Activated CD8-positive, alpha-beta memory T cell treated with anti-CD3 and anti-CD28 coated beads, Interleukin-2, amount 10 ng/mL, durations not matched to agents 7 days and 5 days (primary cell): ENCODE measurements at regions of chr5 and their contacts with region 1.

Region 1: GRCh38 chr5:160439205-160439600 is 17.5 kb downstream of the PTTG1 start:
- DNase-seq: peak; percentile 94
- ATAC-seq: peak; percentile 85
- H3K4me3 Mint-ChIP-seq: peak overlapping the region; percentile 87
- H3K27ac Mint-ChIP-seq: peak overlapping the region; percentile 92
- H3K4me1 Mint-ChIP-seq: peaks cover 44% of the 10 kb centered on the region
- H3K27me3 Mint-ChIP-seq: peaks cover 4% of the 10 kb centered on the region

Region 2: GRCh38 chr5:160418561-160419457 is 20.4 kb before region 1 on chr5 and contains the start of gene SLU7:
- CTCF ChIA-PET with region 1: interaction called, 130 read pairs
- DNase-seq: peak; percentile 96
- ATAC-seq: peak; percentile 79
- H3K4me3 Mint-ChIP-seq: peak within 1 kb of the TSS; percentile 87
- H3K27ac Mint-ChIP-seq: peak within 1 kb of the TSS; percentile 96
- H3K4me1 Mint-ChIP-seq: peaks cover 58% of the 10 kb centered on the region
- H3K27me3 Mint-ChIP-seq: no peaks in the 10 kb centered on the region
- total RNA-seq, gene SLU7: 50.1 to 54.6 TPM

Region 3: DNA sequence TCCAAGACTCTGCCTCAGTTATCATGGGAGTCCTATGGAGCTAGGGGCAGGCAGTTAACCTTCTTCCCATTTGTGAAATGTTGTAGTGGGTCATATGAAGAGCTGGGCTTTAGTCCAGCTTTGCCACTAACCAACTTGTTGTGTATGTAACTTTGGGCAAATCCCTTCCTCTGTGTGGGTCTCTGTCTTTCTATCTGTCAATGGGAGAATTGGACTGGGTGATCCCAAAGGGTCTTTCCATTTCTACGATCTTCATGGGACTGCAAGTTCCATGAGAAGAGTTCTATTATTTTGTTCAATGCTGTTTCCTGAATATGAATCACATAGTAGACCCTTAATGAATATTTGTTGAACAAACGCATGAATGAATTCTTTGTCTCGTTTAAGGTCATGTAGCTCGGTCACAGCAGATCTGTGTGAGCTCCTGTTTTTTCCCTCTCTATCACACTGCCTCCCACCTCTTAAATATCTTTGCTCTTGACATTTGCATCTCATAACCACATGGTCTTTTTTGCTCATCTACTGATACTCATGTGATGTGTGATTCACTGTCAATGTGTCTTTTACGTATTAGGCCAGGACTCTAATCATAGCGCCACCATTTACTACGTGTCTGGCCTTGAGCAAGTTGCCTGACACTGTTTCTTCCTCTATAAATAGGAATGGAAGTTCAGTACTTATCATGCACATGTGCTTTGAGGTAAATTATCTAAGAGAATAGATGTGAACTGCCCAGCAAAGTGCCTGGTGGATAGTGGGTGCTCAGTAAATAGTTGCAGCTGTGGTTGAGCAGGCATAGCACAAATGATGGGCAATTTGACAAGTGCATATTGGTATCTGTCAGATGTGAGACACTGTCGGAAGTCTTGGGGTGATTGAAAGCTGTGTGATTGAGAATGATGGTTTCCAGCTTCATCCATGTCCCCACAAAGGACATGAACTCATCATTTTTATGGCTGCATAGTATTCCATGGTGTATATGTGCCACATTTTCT is 19.9 kb after region 1 on chr5:
- CTCF ChIA-PET with region 1: interaction called, 172 read pairs
- DNase-seq: no peak
- ATAC-seq: no peak
- H3K4me3 Mint-ChIP-seq: no peak overlapping the region
- H3K27ac Mint-ChIP-seq: no peak overlapping the region
- H3K4me1 Mint-ChIP-seq: peaks cover 21% of the 10 kb centered on the region
- H3K27me3 Mint-ChIP-seq: peaks cover 4% of the 10 kb centered on the region

Region 4: DNA sequence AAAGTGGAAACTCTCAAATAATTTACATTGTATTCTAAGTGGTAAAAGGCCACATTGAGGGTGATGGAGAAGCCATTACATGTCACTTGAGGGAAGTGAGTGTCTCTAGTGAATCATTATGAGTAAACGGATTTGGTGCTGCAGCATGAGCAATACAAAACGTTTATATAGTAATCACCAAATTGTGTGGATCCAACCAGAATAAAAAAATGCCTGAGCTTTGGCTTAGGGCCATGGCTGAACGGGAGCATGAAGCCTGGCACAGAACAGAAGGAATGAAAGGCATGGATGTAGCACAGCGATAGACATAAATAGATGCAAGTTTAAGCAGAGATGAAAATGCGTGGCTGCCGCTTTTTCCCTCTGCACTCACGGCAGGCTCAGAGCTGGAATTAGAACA is 40.7 kb after region 1 on chr5:
- CTCF ChIA-PET with region 1: interaction called, 33 read pairs
- DNase-seq: no peak
- ATAC-seq: no peak
- H3K4me3 Mint-ChIP-seq: no peak overlapping the region
- H3K27ac Mint-ChIP-seq: peak overlapping the region; percentile 37
- H3K4me1 Mint-ChIP-seq: peaks cover 74% of the 10 kb centered on the region
- H3K27me3 Mint-ChIP-seq: no peaks in the 10 kb centered on the region

Region 5: GRCh38 chr5:160500786-160501779 is 61.9 kb after region 1 on chr5:
- CTCF ChIA-PET with region 1: interaction called, 106 read pairs
- DNase-seq: no peak
- ATAC-seq: no peak
- H3K4me3 Mint-ChIP-seq: no peak overlapping the region
- H3K27ac Mint-ChIP-seq: no peak overlapping the region
- H3K4me1 Mint-ChIP-seq: peaks cover 17% of the 10 kb centered on the region
- H3K27me3 Mint-ChIP-seq: peaks cover 3% of the 10 kb centered on the region

Region 6: GRCh38 chr5:160573318-160573717 is 134.1 kb after region 1 on chr5:
- CTCF ChIA-PET with region 1: no interaction called
- DNase-seq: no peak
- ATAC-seq: no peak
- H3K4me3 Mint-ChIP-seq: no peak overlapping the region
- H3K27ac Mint-ChIP-seq: no peak overlapping the region
- H3K4me1 Mint-ChIP-seq: no peaks in the 10 kb centered on the region
- H3K27me3 Mint-ChIP-seq: peaks cover 7% of the 10 kb centered on the region

Region 7: DNA sequence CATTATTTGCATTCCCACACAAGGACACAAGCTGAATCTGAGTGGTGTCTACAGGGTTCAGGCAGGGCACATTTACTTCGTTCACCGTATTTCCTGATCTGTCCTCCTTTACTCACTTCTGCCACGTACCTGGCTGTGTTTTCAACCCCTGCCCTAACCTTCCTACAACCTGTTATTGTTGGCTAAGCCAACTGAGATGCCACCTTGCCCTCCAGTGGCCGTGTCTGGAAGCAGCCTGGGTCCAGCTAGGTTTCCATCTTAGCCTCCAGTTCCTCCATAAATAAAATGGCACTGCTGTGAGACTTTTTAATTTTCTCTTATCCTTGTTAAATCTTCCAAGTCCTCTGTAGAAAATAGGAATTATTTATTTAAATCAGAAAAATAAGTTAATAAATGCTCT is 348.0 kb after region 1 on chr5:
- CTCF ChIA-PET with region 1: interaction called, 18 read pairs
- DNase-seq: peak; percentile 44
- ATAC-seq: no peak
- H3K4me3 Mint-ChIP-seq: no peak overlapping the region
- H3K27ac Mint-ChIP-seq: no peak overlapping the region
- H3K4me1 Mint-ChIP-seq: no peaks in the 10 kb centered on the region
- H3K27me3 Mint-ChIP-seq: no peaks in the 10 kb centered on the region